ENCODE measurements at regions of chr3 and their contacts with region 1.

Region 1: DNA sequence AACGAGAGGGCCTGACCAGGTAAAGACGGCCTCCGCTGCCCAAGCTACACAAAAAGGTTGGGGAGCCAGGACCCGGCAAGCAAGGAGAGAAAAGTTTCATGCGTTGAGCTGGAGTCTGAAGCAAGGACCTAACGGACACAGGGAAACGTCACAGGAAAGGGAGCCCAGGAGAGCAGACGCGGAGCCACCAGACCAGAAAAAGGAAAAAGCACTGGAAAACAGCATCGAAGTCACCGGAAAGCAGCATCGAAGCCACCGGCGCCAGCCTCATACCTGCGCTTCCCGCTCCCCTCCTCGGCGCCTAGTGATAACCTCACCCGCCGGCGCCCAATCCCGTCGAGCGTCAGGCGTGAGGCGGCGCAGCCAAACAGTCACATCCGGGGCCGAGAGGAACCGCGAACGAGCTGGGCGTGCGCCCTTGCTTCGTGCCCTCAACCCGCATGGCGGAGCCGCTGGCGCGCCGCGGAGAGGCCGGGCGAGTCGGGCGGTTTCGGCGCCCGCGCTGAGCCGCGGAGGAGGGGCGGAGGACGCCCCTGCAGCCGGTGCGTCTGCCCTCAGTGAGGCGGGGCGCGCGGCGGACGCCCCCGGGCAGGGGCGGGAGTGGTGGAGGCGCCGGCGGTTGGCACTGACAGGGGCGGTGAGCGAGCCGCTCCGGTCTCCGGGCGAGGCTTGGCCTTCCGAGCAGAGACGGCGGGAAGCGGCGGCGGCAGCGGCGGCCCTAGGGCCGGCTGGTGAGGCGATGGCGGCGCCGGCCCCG is at the starts of genes FBXO45 and WDR53:
- DNase-seq: peak; percentile 97
- ATAC-seq: peak; percentile 90
- H3K4me3 ChIP-seq: peak within 1 kb of the TSS; percentile 89 to 99 (median 97)
- H3K4me3 Mint-ChIP-seq: peak within 1 kb of the TSS; percentile 98
- H3K27ac ChIP-seq: peak within 1 kb of the TSS; percentile 74 to 94
- H3K27ac Mint-ChIP-seq: peak within 1 kb of the TSS; percentile 95
- H3K4me1 ChIP-seq: peaks cover 17 to 21% of the 10 kb centered on the region in 2 donors
- H3K4me1 Mint-ChIP-seq: peaks cover 28% of the 10 kb centered on the region
- H3K27me3 ChIP-seq: no peaks in the 10 kb centered on the region
- H3K27me3 Mint-ChIP-seq: no peaks in the 10 kb centered on the region
- CTCF ChIP-seq: no peak
- total RNA-seq, gene FBXO45: 4.7 and 5.2 TPM in 2 replicates
- total RNA-seq, gene WDR53: 18.2 and 21.0 TPM in 2 replicates

Region 2: GRCh38 chr3:196287440-196288148 is 280.8 kb before region 1 on chr3 and contains the start of gene PCYT1A:
- CTCF ChIA-PET with region 1: no interaction called
- POLR2A ChIA-PET with region 1: no interaction called
- intact Hi-C with region 1: loop called (anchors 1 kb)
- DNase-seq: peak; percentile 87
- ATAC-seq: peak; percentile 78
- H3K4me3 ChIP-seq: peak within 1 kb of the TSS; percentile 68 to 98 (median 96)
- H3K4me3 Mint-ChIP-seq: peak within 1 kb of the TSS; percentile 100
- H3K27ac ChIP-seq: peak within 1 kb of the TSS; percentile 70 to 92
- H3K27ac Mint-ChIP-seq: peak within 1 kb of the TSS; percentile 98
- H3K4me1 ChIP-seq: peaks cover 17 to 36% of the 10 kb centered on the region in 2 donors
- H3K4me1 Mint-ChIP-seq: peaks cover 58% of the 10 kb centered on the region
- H3K27me3 ChIP-seq: no peaks in the 10 kb centered on the region
- H3K27me3 Mint-ChIP-seq: no peaks in the 10 kb centered on the region
- CTCF ChIP-seq: no peak
- total RNA-seq, gene PCYT1A: 59.9 and 61.2 TPM in 2 replicates

Region 3: DNA sequence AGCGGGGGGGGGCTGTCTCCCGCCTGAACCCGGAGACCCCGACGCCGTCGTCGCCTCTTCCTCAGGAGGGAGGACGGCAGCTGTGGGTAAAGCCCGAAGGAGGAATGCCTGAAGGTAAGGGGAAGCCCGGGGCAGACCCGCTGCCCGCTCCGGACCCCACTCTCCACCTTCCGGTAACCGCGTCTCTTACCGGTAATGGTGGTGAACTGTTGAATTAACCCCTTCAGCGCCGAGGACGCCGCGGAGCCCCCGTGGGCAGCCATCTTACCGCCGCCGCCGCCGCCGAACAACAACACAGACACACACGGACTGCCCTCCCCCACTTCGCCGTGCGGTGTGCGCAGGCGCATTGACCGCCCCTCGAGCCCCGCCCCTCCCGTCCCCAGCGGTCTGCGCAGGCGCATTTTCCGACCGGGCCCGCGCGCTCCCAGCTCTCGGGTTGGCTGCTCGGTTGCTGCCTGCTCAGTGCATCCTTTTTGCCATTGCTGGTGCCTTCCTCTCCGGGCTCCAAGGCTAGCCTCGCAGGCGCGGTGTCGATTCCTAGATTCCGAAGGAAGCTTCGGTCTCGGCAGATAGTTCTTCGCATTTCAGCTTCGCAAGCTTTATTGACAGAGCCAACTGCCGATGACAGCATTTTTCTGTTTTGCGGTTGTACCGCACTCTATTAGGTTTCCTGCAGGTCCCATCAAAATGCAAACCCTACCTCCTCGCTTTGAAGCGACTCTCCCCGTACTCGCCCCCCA is 136.1 kb before region 1 on chr3 and contains the start of gene UBXN7:
- CTCF ChIA-PET with region 1: interaction called, 3 read pairs
- POLR2A ChIA-PET with region 1: no interaction called
- intact Hi-C with region 1: loop called (anchors 1 kb)
- DNase-seq: peak; percentile 97
- ATAC-seq: peak; percentile 84
- H3K4me3 ChIP-seq: peak within 1 kb of the TSS; percentile 77 to 100 (median 93)
- H3K4me3 Mint-ChIP-seq: peak within 1 kb of the TSS; percentile 75
- H3K27ac ChIP-seq: peak within 1 kb of the TSS; percentile 88 to 90
- H3K27ac Mint-ChIP-seq: peak within 1 kb of the TSS; percentile 69
- H3K4me1 ChIP-seq: peaks cover 7 to 19% of the 10 kb centered on the region in 2 donors
- H3K4me1 Mint-ChIP-seq: peaks cover 20% of the 10 kb centered on the region
- H3K27me3 ChIP-seq: no peaks in the 10 kb centered on the region
- H3K27me3 Mint-ChIP-seq: no peaks in the 10 kb centered on the region
- CTCF ChIP-seq: no peak
- total RNA-seq, gene UBXN7: 107 and 114 TPM in 2 replicates

Region 4: DNA sequence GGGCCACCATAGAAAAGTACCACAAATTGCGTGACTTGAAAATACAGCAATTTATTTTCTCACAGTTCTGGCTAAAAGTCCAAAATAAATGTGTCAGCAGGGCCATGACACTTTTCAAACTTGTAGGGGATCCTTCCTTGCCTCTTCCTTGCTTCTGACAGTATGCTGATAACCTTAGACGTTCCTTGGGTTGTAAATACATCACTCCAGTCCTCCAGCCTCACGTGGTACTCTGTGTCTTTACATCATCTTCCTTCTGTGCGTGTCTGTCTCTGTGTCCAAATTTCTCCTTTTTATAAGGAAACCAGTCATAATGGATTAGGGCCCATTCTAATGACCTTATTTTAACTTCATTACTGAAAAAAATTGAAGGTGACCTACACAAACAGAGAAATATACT is 72.2 kb before region 1 on chr3:
- CTCF ChIA-PET with region 1: no interaction called
- POLR2A ChIA-PET with region 1: no interaction called
- intact Hi-C with region 1: no loop called
- DNase-seq: no peak
- ATAC-seq: no peak
- H3K4me3 ChIP-seq: no peak overlapping the region
- H3K4me3 Mint-ChIP-seq: no peak overlapping the region
- H3K27ac ChIP-seq: no peak overlapping the region
- H3K27ac Mint-ChIP-seq: no peak overlapping the region
- H3K4me1 ChIP-seq: peaks cover 10 to 15% of the 10 kb centered on the region in 2 donors
- H3K4me1 Mint-ChIP-seq: peaks cover 39% of the 10 kb centered on the region
- H3K27me3 ChIP-seq: no peaks in the 10 kb centered on the region
- H3K27me3 Mint-ChIP-seq: no peaks in the 10 kb centered on the region
- CTCF ChIP-seq: no peak

Region 5: GRCh38 chr3:196528639-196529233 is 39.7 kb before region 1 on chr3:
- CTCF ChIA-PET with region 1: interaction called, 6 read pairs
- POLR2A ChIA-PET with region 1: interaction called, 3 read pairs
- intact Hi-C with region 1: loop called (anchors 1 kb)
- DNase-seq: peak; percentile 83
- ATAC-seq: peak; percentile 98
- H3K4me3 ChIP-seq: peak overlapping the region; percentile 38 to 60 (median 38)
- H3K4me3 Mint-ChIP-seq: peak overlapping the region; percentile 84
- H3K27ac ChIP-seq: no peak overlapping the region
- H3K27ac Mint-ChIP-seq: peak overlapping the region; percentile 73
- H3K4me1 ChIP-seq: peaks cover 6 to 8% of the 10 kb centered on the region in 2 donors
- H3K4me1 Mint-ChIP-seq: peaks cover 7% of the 10 kb centered on the region
- H3K27me3 ChIP-seq: peaks cover 0 to 2% (median 0%) of the 10 kb centered on the region in 4 experiments
- H3K27me3 Mint-ChIP-seq: peaks cover 3% of the 10 kb centered on the region
- CTCF ChIP-seq: peak; percentile 82

Region 6: DNA sequence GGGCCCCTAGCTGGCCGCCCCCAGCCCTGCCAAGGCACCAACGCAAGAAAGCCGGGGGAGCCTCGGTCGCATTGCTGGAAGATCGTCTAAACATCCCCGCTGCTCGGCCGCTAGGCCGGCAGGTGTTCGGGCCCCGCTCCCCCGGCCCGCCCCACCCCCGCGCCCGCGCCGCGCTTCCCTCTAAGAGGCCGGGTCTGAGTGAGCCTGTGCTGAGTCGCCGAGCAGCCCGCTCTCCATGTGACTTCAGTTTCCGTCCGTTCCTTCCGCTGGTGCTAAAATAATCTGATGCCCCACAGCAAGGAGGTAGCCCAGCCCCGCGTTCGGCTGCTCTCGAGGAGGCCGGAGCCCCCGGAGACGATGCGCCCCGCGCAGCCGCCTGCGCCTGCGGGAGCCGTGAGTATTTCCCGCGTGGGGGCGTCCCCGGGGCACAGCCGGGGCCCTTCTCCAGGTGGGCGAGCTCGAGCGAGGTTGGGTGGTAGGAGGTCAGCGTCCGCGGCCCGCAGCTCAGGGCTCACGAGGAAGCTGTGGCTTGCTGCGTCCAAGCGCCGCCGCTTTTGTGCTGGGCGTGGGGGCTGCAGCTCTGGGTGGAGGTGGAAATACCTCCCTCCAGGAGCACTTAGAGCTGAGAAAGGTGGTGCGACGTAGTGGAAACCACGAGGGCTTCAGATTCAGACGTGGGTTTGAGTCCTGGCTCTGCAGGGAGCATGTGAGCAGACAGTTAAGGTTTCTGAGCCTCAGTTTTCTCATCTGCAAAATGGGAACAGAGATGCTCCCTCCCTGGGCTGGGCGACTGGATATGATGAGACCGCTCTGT is 71.3 kb after region 1 on chr3 and contains the start of gene NRROS:
- CTCF ChIA-PET with region 1: no interaction called
- POLR2A ChIA-PET with region 1: no interaction called
- intact Hi-C with region 1: loop called (anchors 2 kb)
- DNase-seq: peak; percentile 91
- ATAC-seq: peak; percentile 48
- H3K4me3 ChIP-seq: peak within 1 kb of the TSS; percentile 80 to 88 (median 83)
- H3K4me3 Mint-ChIP-seq: peak within 1 kb of the TSS; percentile 89
- H3K27ac ChIP-seq: peak within 1 kb of the TSS; percentile 85 to 93
- H3K27ac Mint-ChIP-seq: peak within 1 kb of the TSS; percentile 99
- H3K4me1 ChIP-seq: peaks cover 58 to 71% of the 10 kb centered on the region in 2 donors
- H3K4me1 Mint-ChIP-seq: peaks cover 73% of the 10 kb centered on the region
- H3K27me3 ChIP-seq: no peaks in the 10 kb centered on the region
- H3K27me3 Mint-ChIP-seq: no peaks in the 10 kb centered on the region
- CTCF ChIP-seq: no peak
- total RNA-seq, gene NRROS: 85.9 and 87.9 TPM in 2 replicates

Region 7: GRCh38 chr3:196739671-196740480 is 171.5 kb after region 1 on chr3 and contains the start of gene PAK2:
- CTCF ChIA-PET with region 1: interaction called, 4 read pairs
- POLR2A ChIA-PET with region 1: interaction called, 5 read pairs
- intact Hi-C with region 1: loop called (anchors 1 kb)
- DNase-seq: peak; percentile 94
- ATAC-seq: peak; percentile 92
- H3K4me3 ChIP-seq: peak within 1 kb of the TSS; percentile 45 to 97 (median 69)
- H3K4me3 Mint-ChIP-seq: peak within 1 kb of the TSS; percentile 100
- H3K27ac ChIP-seq: peak within 1 kb of the TSS; percentile 48 to 96
- H3K27ac Mint-ChIP-seq: peak within 1 kb of the TSS; percentile 98
- H3K4me1 ChIP-seq: peaks cover 21 to 26% of the 10 kb centered on the region in 2 donors
- H3K4me1 Mint-ChIP-seq: peaks cover 28% of the 10 kb centered on the region
- H3K27me3 ChIP-seq: no peaks in the 10 kb centered on the region
- H3K27me3 Mint-ChIP-seq: no peaks in the 10 kb centered on the region
- CTCF ChIP-seq: no peak
- total RNA-seq, gene PAK2: 81.7 and 97.7 TPM in 2 replicates

Region 8: DNA sequence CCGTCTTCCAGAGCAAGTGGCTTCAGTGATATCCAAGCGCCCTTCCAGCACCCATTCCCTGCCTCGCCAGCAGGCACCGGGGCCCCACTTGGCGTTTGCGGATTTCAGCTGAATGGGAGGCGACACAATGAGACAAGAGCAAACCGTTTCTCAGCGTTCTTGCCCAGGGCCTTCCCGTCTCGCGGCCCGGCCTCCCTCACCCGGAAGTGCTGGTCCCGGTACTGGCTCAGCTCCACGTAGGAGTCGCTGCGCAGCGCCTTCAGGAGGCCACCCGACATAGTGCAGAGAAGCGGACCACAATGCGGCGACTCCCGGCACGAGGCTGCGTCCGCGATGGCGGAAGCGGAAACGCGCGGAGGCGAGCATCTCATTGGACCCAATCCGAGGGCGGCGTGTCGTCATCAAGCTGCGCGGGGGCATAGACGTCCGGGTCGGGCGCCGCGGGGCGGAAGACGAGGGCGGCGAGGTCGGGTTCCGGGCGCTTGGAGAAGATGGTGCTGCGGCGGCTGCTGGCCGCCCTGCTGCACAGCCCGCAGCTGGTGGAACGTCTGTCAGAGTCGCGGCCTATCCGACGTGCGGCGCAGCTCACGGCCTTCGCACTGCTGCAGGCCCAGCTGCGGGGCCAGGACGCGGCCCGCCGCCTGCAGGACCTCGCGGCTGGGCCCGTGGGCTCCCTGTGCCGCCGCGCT is 373.9 kb after region 1 on chr3 and contains the start of gene NCBP2:
- CTCF ChIA-PET with region 1: no interaction called
- POLR2A ChIA-PET with region 1: interaction called, 5 read pairs
- intact Hi-C with region 1: loop called (anchors 1 kb)
- DNase-seq: peak; percentile 99
- ATAC-seq: peak; percentile 91
- H3K4me3 ChIP-seq: peak within 1 kb of the TSS; percentile 83 to 99 (median 92)
- H3K4me3 Mint-ChIP-seq: peak within 1 kb of the TSS; percentile 98
- H3K27ac ChIP-seq: peak within 1 kb of the TSS; percentile 92 to 97
- H3K27ac Mint-ChIP-seq: peak within 1 kb of the TSS; percentile 99
- H3K4me1 ChIP-seq: peaks cover 29 to 35% of the 10 kb centered on the region in 2 donors
- H3K4me1 Mint-ChIP-seq: peaks cover 50% of the 10 kb centered on the region
- H3K27me3 ChIP-seq: no peaks in the 10 kb centered on the region
- H3K27me3 Mint-ChIP-seq: no peaks in the 10 kb centered on the region
- CTCF ChIP-seq: peak; percentile 77
- total RNA-seq, gene NCBP2: 93.4 and 95.0 TPM in 2 replicates